Uterus (tissue), 4 donors: ENCODE measurements at regions of chr20 and their contacts with region 1.

Region 1: DNA sequence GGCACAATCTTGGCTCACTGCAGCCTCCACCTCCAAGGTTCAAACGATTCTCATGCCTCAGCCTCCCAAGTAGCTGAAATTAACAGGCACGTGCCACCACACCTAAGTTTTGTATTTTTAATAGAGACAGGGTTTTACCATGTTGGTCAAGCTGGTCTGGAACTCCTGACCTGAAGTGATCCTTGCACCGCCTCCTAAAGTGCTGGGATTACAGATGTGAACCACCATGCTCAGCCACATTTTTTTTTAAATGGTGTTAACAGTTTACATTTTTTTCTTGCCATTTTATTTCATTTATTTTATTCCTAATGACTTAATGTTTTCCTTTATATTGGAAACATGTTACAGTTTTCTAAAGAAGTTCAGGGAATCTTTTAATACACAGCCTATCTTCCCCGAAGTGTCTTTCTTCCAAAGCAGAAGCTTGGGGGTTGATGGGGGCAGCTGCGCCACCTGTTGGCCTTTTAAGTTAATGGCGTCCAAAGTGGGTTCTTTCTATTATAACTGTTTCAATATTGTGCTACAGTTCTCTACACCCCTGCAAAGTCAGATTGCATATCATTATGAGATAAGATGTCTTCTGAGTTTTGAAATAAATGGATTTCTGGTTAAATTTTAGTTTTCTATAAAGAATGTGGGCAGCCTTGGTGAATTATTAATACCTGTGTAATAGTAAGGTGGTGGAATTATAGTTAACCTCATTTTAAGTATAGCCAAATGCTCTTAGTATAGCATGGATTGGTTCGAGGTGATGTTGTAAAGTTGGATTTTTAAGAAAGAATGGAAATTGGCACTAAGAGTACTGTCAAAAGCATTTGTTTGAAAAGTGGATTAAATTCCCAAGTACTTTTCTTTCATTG is 42.0 kb upstream of the PLCG1 start:
- DNase-seq: peak; percentile 66 to 67
- H3K4me3 ChIP-seq: no peak overlapping the region
- H3K27ac ChIP-seq: no peak overlapping the region
- H3K4me1 ChIP-seq: peaks cover 0 to 9% of the 10 kb centered on the region in 2 donors
- H3K27me3 ChIP-seq: no peaks in the 10 kb centered on the region
- CTCF ChIP-seq: peak; percentile 80 to 87 (median 82)
- POLR2A ChIP-seq: no peak

Region 2: DNA sequence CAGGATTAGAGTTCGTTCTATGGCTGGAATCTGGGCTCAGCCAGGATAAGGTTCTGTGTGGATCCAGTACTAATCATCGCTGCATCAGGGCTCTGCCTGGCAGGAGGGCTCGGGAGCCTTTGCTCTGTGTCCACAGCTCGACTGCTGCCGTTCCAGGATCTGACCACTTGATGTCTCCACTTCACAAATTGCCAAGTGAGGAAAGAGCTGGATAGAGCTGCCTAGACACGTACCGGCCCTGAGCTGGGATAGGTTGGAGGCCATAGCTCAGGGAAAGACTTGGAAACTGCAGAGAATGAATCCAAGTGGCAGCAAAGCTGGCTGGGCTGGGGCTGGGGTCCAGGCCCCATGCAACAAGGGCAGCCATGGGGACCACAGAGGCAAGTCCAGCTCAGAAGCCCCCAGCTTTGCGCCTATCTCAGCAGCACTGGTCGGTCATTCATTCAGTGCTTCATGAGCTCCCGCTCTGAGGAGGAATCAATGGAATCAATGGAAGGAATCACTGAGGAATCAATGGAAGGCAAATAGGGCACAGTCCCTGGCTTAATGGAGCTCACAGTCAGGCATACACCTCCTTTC is 104.7 kb before region 1 on chr20:
- intact Hi-C with region 1: loop called (anchors 10 kb)
- DNase-seq: peak; percentile 78 to 81
- H3K4me3 ChIP-seq: no peak overlapping the region
- H3K27ac ChIP-seq: no peak overlapping the region
- H3K4me1 ChIP-seq: no peaks in the 10 kb centered on the region
- H3K27me3 ChIP-seq: no peaks in the 10 kb centered on the region
- CTCF ChIP-seq: peak; percentile 75 to 89 (median 82)
- POLR2A ChIP-seq: no peak